Mammary epithelial cell (primary cell): ENCODE measurements at regions of chr1 and their contacts with region 1.

Region 1: DNA sequence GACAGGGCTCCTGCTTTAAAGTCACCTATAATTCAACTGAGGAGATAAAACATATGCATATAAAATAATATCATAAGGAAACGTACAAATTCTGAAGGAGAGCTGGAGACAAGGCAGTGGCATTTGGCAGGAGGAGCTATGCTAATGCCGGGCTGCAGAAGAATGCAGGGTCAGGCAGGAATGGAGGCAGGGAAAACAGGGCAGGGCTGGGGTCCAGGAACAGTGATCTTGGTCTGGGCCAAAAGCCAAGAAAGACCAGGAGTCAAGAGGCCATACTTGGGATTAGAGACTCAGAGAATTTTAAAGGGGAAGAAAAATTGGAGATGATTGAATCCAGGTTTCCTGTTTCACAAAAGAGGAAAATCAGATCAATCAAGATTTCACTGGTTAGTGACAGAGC is 20.0 kb upstream of the BRDT start:
- DNase-seq: no peak
- H3K4me3 ChIP-seq: no peak overlapping the region
- H3K27ac ChIP-seq: no peak overlapping the region
- H3K4me1 ChIP-seq: no peaks in the 10 kb centered on the region
- H3K27me3 ChIP-seq: no peaks in the 10 kb centered on the region
- CTCF ChIP-seq: no peak

Region 2: GRCh38 chr1:91523482-91523881 is 405.8 kb before region 1 on chr1:
- CTCF ChIA-PET with region 1: no interaction called
- dilution Hi-C with region 1: no loop called
- in situ Hi-C with region 1: loop called (anchors 5 kb)
- intact Hi-C with region 1: no loop called
- DNase-seq: no peak
- H3K4me3 ChIP-seq: no peak overlapping the region
- H3K27ac ChIP-seq: no peak overlapping the region
- H3K4me1 ChIP-seq: no peaks in the 10 kb centered on the region
- H3K27me3 ChIP-seq: no peaks in the 10 kb centered on the region
- CTCF ChIP-seq: no peak

Region 3: DNA sequence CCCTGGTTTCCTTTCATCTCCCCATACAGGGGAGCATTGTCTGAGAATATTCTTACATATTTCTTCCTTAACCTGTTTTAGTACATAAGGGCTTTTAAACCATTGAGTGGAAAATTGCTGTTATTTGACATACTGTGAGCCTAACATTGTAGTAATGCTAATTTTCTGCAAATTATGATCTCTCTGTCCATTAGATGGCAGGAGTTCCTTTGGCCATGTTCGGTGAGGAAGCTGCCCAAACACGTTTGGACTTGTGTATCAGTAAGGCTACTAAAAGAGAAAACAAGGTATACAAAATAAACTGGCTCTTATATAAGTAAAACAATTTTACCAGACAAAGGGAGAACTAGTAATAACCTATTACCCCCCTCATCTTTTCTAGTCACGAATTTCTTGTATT is 399.4 kb before region 1 on chr1:
- CTCF ChIA-PET with region 1: no interaction called
- dilution Hi-C with region 1: no loop called
- in situ Hi-C with region 1: loop called in 1 of 2 experiments (anchors 5 kb)
- intact Hi-C with region 1: loop called (anchors 1 kb)
- DNase-seq: peak; percentile 54
- H3K4me3 ChIP-seq: no peak overlapping the region
- H3K27ac ChIP-seq: no peak overlapping the region
- H3K4me1 ChIP-seq: peaks cover 9% of the 10 kb centered on the region
- H3K27me3 ChIP-seq: no peaks in the 10 kb centered on the region
- CTCF ChIP-seq: peak; percentile 56 to 71

Region 4: GRCh38 chr1:91795591-91796389 is 133.5 kb before region 1 on chr1:
- CTCF ChIA-PET with region 1: interaction called, 13 read pairs
- dilution Hi-C with region 1: no loop called
- in situ Hi-C with region 1: no loop called
- intact Hi-C with region 1: no loop called
- DNase-seq: peak; percentile 14
- H3K4me3 ChIP-seq: no peak overlapping the region
- H3K27ac ChIP-seq: no peak overlapping the region
- H3K4me1 ChIP-seq: no peaks in the 10 kb centered on the region
- H3K27me3 ChIP-seq: peaks cover 46% of the 10 kb centered on the region
- CTCF ChIP-seq: no peak

Region 5: DNA sequence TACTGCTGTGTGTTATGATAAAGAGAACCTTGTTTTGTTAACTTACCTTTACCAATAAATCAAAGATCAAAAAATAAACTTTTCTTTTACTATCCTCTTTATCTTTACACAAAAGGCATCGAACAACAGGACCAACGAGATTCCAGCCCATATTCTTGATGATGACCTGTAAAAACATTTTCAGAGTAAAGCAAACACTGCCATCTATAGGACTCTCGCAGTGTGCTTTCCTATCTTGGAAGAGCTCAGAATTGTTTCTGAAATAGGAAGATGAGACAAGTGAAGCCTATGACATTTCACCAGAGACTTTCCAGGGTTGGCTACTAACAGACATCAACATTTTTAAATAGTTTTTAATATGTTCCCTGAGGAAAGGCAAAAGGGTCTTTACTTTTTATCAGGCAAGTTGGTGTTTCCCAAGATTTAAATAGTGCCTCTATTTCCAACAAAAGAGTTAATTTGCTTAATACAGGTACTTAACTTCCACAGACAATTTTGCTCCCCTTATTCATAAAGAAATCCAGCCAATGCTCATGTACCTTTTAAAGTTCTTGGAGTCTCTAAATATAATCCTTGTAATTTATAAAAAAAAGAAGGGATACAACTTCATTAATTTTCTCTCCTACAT is 362.2 kb after region 1 on chr1:
- CTCF ChIA-PET with region 1: interaction called, 4 read pairs
- dilution Hi-C with region 1: no loop called
- in situ Hi-C with region 1: no loop called
- intact Hi-C with region 1: loop called (anchors 2 kb)
- DNase-seq: peak; percentile 49
- H3K4me3 ChIP-seq: no peak overlapping the region
- H3K27ac ChIP-seq: no peak overlapping the region
- H3K4me1 ChIP-seq: no peaks in the 10 kb centered on the region
- H3K27me3 ChIP-seq: no peaks in the 10 kb centered on the region
- CTCF ChIP-seq: peak; percentile 75 to 83